ENCODE measurements at regions of chrX and their contacts with region 1.

Region 1: DNA sequence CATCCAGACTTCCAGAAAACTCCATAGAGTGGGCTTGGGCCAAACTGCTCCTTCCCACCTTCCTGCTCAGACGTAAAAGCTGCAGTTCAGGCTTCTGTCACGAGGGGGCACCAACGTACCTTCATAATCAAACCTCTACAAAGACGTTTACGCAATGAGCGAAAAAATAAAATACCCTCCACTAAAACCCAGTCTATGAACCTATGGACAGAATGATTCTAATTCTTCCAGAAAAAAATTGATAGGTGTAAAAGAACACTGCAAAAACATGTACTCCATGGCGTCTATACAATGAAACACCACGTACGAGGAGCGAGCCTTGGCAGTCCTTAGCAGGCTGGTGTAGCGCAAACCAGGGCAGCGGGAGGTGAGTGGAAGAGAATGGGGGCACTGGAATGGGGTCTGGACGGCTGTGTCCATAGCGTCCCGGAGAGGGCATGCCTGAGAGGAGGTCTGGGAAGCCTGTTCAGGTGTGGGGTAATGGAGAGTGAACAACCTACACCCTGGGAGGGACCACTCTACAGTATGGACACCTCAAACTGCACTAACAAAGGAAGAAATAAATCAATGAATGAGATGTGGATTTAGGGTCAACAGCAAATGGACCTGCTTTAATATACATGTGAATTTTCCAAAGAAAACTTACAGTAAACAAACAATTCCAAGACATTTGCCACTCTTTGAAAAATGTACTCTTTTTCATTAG is 14.4 kb upstream of the RAB40A start:
- DNase-seq: peak; percentile 70
- ATAC-seq: peak; percentile 74
- H3K4me3 ChIP-seq: peak overlapping the region in 1 of 5 experiments; percentile 28
- H3K4me3 Mint-ChIP-seq: peak overlapping the region; percentile 76
- H3K27ac ChIP-seq: no peak overlapping the region
- H3K27ac Mint-ChIP-seq: peak overlapping the region; percentile 26
- H3K4me1 ChIP-seq: peaks cover 3 to 4% of the 10 kb centered on the region in 2 donors
- H3K4me1 Mint-ChIP-seq: peaks cover 4% of the 10 kb centered on the region
- H3K27me3 ChIP-seq: peaks cover 0 to 3% (median 0%) of the 10 kb centered on the region in 4 experiments
- H3K27me3 Mint-ChIP-seq: no peaks in the 10 kb centered on the region
- CTCF ChIP-seq: peak; percentile 73

Region 2: GRCh38 chrX:103711533-103712369 is 178.1 kb after region 1 on chrX:
- CTCF ChIA-PET with region 1: interaction called, 10 read pairs
- POLR2A ChIA-PET with region 1: no interaction called
- intact Hi-C with region 1: loop called (anchors 5 kb)
- DNase-seq: peak; percentile 62
- ATAC-seq: peak; percentile 31
- H3K4me3 ChIP-seq: no peak overlapping the region
- H3K4me3 Mint-ChIP-seq: no peak overlapping the region
- H3K27ac ChIP-seq: no peak overlapping the region
- H3K27ac Mint-ChIP-seq: no peak overlapping the region
- H3K4me1 ChIP-seq: no peaks in the 10 kb centered on the region
- H3K4me1 Mint-ChIP-seq: no peaks in the 10 kb centered on the region
- H3K27me3 ChIP-seq: no peaks in the 10 kb centered on the region
- H3K27me3 Mint-ChIP-seq: no peaks in the 10 kb centered on the region
- CTCF ChIP-seq: peak; percentile 64

Region 3: DNA sequence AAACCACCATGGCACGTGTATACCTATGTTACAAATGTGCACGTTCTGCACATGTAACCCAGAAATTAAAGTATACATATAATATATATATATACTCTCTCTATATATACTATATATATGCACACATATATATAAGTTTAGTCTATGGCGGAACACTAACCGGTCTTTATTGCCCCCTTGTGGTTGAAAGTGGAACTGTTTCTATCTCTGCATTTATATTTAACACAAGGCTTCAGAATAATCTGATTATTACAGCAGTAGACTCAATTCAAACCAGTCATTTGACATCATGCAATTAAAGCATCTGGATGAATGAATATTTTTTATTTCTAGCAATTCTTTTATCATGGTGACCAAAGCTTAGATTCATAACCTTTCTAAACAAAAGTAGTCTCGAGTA is 283.8 kb after region 1 on chrX:
- CTCF ChIA-PET with region 1: interaction called, 12 read pairs
- POLR2A ChIA-PET with region 1: no interaction called
- intact Hi-C with region 1: no loop called
- DNase-seq: peak; percentile 64
- ATAC-seq: no peak
- H3K4me3 ChIP-seq: no peak overlapping the region
- H3K4me3 Mint-ChIP-seq: no peak overlapping the region
- H3K27ac ChIP-seq: no peak overlapping the region
- H3K27ac Mint-ChIP-seq: no peak overlapping the region
- H3K4me1 ChIP-seq: no peaks in the 10 kb centered on the region
- H3K4me1 Mint-ChIP-seq: no peaks in the 10 kb centered on the region
- H3K27me3 ChIP-seq: no peaks in the 10 kb centered on the region
- H3K27me3 Mint-ChIP-seq: no peaks in the 10 kb centered on the region
- CTCF ChIP-seq: peak; percentile 70

Region 4: DNA sequence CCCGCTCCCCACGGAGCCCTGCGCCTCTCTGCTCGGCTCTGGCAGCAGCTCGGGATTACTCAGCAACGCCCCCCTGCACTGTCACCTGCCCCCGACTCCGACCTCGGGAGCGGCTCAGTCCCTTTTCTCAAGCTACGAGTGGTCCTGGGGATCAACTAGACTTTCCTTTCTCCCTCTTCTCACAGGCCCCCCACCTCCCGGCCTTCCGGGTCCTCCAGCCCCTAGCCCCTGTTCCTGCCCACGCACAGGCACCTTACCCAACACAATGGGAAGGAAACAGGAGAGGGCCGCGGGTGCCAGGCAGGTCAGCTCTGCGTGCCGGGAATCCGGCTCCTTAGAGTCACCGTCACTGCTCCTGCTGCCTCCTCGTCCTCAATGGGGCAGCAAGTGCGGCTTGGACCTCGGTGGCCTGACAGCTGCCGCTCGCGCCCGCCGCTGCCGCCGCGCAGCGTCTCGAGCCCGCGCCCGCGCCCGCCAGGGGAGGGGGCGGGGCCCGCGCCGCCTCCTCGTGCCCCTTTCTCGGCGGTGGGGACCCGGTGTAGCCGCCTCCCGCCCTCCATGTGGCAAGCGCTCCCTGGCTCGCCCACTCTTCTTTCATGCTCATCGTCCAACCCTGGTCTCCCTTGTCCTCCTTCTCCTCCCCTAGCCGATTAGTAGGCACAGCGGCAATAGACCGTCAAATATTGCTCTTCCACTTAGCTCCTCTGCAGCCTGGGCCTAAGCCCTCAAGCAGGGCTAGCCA is 298.3 kb after region 1 on chrX and contains the start of gene RAB9B:
- CTCF ChIA-PET with region 1: interaction called, 3 read pairs
- POLR2A ChIA-PET with region 1: no interaction called
- intact Hi-C with region 1: loop called (anchors 5 kb)
- DNase-seq: no peak
- ATAC-seq: peak; percentile 93
- H3K4me3 ChIP-seq: peak within 1 kb of the TSS in 4 of 5 experiments; percentile 64 to 72 (median 68)
- H3K4me3 Mint-ChIP-seq: peak within 1 kb of the TSS; percentile 94
- H3K27ac ChIP-seq: no peak within 1 kb of the TSS
- H3K27ac Mint-ChIP-seq: peak within 1 kb of the TSS; percentile 46
- H3K4me1 ChIP-seq: peaks cover 4 to 5% of the 10 kb centered on the region in 2 donors
- H3K4me1 Mint-ChIP-seq: peaks cover 5% of the 10 kb centered on the region
- H3K27me3 ChIP-seq: no peaks in the 10 kb centered on the region
- H3K27me3 Mint-ChIP-seq: peaks cover 3% of the 10 kb centered on the region
- CTCF ChIP-seq: no peak
- total RNA-seq, gene RAB9B: 0.44 and 0.75 TPM in 2 replicates